GM10248 (cell line): ENCODE measurements at regions of chr3 and their contacts with region 1.

Region 1: GRCh38 chr3:124928333-124929202 is 6.0 kb downstream of the MUC13 start:
- DNase-seq: peak; percentile 42
- CTCF ChIP-seq: peak; percentile 66

Region 2: DNA sequence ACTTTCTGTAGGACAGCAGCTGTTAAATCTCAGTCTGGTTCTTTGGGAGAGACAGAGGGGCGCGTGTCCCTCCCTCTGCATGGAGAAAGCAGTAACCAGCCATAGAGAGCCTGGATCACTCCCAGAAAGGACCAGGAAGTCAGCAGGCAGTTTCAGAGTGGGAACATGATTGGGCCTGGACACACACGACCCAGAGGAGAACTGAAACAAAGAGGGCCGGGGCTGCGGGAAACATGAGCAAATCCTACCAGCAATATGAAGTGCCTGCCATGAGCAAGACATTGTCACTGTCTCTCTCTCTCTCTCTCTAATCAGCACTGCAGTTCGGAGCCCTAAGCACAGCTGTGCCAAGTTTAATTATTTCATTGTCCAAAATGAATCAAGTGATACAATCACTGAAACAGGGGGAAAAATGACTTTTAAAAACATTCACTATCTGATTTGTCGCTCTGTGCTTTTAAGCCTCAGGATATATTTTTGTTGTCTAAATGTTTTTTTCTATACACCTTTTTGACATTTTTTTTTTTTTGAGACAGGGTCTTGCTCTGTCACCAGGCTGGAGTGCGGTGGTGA is 11.6 kb before region 1 on chr3:
- CTCF ChIA-PET with region 1: interaction called, 15 read pairs
- POLR2A ChIA-PET with region 1: no interaction called
- DNase-seq: no peak
- CTCF ChIP-seq: no peak

Region 3: GRCh38 chr3:125437631-125438435 is 509.3 kb after region 1 on chr3:
- CTCF ChIA-PET with region 1: interaction called, 19 read pairs
- POLR2A ChIA-PET with region 1: no interaction called
- DNase-seq: peak; percentile 58
- CTCF ChIP-seq: peak; percentile 82